Activated CD8-positive, alpha-beta T cell treated with anti-CD3 and anti-CD28 coated beads for 36 hours (primary cell): ENCODE measurements at regions of chr9 and their contacts with region 1.

Region 1: DNA sequence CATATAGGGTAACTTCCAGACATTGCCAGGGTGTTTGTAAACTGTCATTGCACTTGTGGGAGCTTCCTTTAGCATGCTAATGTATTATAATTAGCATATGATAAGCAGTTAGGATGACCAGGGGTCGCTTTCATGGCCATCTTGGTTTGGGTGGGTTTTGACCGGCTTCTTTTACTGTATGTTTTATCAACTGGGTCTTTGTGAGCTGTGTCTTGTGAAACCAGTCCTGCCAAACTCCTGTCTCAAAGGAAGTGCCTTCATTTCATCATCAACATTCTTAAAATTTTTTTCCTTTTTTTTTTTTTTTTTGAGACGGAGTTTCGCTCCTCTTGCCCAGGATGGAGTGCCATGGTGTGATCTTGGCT is 11.9 kb upstream of the MELK start:
- DNase-seq: no peak
- ATAC-seq: no peak
- H3K4me3 Mint-ChIP-seq: no peak overlapping the region
- H3K27ac Mint-ChIP-seq: no peak overlapping the region
- H3K4me1 Mint-ChIP-seq: no peaks in the 10 kb centered on the region
- H3K27me3 Mint-ChIP-seq: no peaks in the 10 kb centered on the region
- CTCF ChIP-seq: no peak

Region 2: DNA sequence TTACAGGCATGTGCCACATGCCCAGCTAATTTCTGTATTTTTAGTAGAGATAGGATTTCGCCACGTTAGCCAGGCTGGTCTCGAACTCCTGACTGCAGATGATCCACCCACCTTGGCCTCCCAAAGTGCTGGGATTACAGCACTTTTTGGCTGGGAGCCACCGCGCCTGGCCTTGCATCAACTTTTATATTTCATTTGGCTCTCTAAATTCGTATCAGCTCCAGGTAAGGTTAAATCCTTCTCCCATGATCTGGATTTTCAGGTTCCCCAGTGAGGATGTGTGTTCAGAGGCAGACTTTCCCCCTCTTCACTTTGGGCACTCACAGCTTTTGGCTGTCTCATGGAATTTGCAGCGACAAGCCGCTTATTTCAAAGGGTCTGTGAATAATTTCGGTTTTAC is 143.9 kb before region 1 on chr9:
- CTCF ChIA-PET with region 1: interaction called, 14 read pairs
- POLR2A ChIA-PET with region 1: no interaction called
- intact Hi-C with region 1: no loop called
- DNase-seq: no peak
- ATAC-seq: no peak
- H3K4me3 Mint-ChIP-seq: no peak overlapping the region
- H3K27ac Mint-ChIP-seq: no peak overlapping the region
- H3K4me1 Mint-ChIP-seq: peaks cover 8% of the 10 kb centered on the region
- H3K27me3 Mint-ChIP-seq: no peaks in the 10 kb centered on the region
- CTCF ChIP-seq: no peak

Region 3: GRCh38 chr9:36441966-36442365 is 118.9 kb before region 1 on chr9:
- CTCF ChIA-PET with region 1: interaction called, 10 read pairs
- POLR2A ChIA-PET with region 1: no interaction called
- intact Hi-C with region 1: no loop called
- DNase-seq: no peak
- ATAC-seq: no peak
- H3K4me3 Mint-ChIP-seq: no peak overlapping the region
- H3K27ac Mint-ChIP-seq: no peak overlapping the region
- H3K4me1 Mint-ChIP-seq: peaks cover 55% of the 10 kb centered on the region
- H3K27me3 Mint-ChIP-seq: no peaks in the 10 kb centered on the region
- CTCF ChIP-seq: no peak

Region 4: GRCh38 chr9:36450110-36450732 is 110.6 kb before region 1 on chr9:
- CTCF ChIA-PET with region 1: interaction called, 47 read pairs
- POLR2A ChIA-PET with region 1: no interaction called
- intact Hi-C with region 1: loop called (anchors 5 kb)
- DNase-seq: peak; percentile 21
- ATAC-seq: no peak
- H3K4me3 Mint-ChIP-seq: no peak overlapping the region
- H3K27ac Mint-ChIP-seq: no peak overlapping the region
- H3K4me1 Mint-ChIP-seq: peaks cover 15% of the 10 kb centered on the region
- H3K27me3 Mint-ChIP-seq: no peaks in the 10 kb centered on the region
- CTCF ChIP-seq: peak; percentile 80

Region 5: GRCh38 chr9:36470643-36471290 is 90.1 kb before region 1 on chr9:
- CTCF ChIA-PET with region 1: interaction called, 13 read pairs
- POLR2A ChIA-PET with region 1: no interaction called
- intact Hi-C with region 1: no loop called
- DNase-seq: peak; percentile 84
- ATAC-seq: peak; percentile 99
- H3K4me3 Mint-ChIP-seq: peak overlapping the region; percentile 71
- H3K27ac Mint-ChIP-seq: peak overlapping the region; percentile 91
- H3K4me1 Mint-ChIP-seq: peaks cover 39% of the 10 kb centered on the region
- H3K27me3 Mint-ChIP-seq: no peaks in the 10 kb centered on the region
- CTCF ChIP-seq: no peak

Region 6: DNA sequence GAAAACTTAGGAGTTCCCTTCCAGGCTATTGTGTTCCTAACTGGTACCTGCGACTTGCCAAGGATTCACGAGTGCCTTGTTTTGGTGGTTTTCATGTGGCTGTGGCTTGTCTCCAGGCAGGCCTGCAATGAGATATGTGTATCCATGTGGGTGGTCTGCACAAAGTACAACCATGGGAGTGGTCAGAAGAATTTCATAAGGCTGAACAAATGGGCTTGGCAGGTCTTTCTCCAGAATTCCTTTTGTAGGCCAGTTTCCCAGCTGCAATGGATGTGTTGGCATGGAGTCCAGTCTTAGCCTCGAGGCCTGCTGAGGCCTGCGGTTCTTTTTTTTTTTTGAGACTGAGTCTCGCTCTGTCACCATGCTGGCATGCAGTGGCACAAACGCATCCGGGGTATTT is 16.9 kb before region 1 on chr9:
- CTCF ChIA-PET with region 1: interaction called, 18 read pairs
- POLR2A ChIA-PET with region 1: no interaction called
- intact Hi-C with region 1: no loop called
- DNase-seq: no peak
- ATAC-seq: no peak
- H3K4me3 Mint-ChIP-seq: no peak overlapping the region
- H3K27ac Mint-ChIP-seq: no peak overlapping the region
- H3K4me1 Mint-ChIP-seq: no peaks in the 10 kb centered on the region
- H3K27me3 Mint-ChIP-seq: no peaks in the 10 kb centered on the region
- CTCF ChIP-seq: no peak

Region 7: GRCh38 chr9:36572515-36573418 is 11.9 kb after region 1 on chr9 and contains the start of gene MELK:
- CTCF ChIA-PET with region 1: interaction called, 13 read pairs
- POLR2A ChIA-PET with region 1: no interaction called
- intact Hi-C with region 1: no loop called
- DNase-seq: peak; percentile 90
- ATAC-seq: peak; percentile 84
- H3K4me3 Mint-ChIP-seq: peak within 1 kb of the TSS; percentile 98
- H3K27ac Mint-ChIP-seq: peak within 1 kb of the TSS; percentile 83
- H3K4me1 Mint-ChIP-seq: peaks cover 31% of the 10 kb centered on the region
- H3K27me3 Mint-ChIP-seq: no peaks in the 10 kb centered on the region
- CTCF ChIP-seq: no peak
- total RNA-seq, gene MELK: 44.3 to 49.5 TPM

Region 8: GRCh38 chr9:36632892-36633291 is 72.1 kb after region 1 on chr9:
- CTCF ChIA-PET with region 1: no interaction called
- POLR2A ChIA-PET with region 1: no interaction called
- intact Hi-C with region 1: no loop called
- DNase-seq: no peak
- ATAC-seq: no peak
- H3K4me3 Mint-ChIP-seq: no peak overlapping the region
- H3K27ac Mint-ChIP-seq: no peak overlapping the region
- H3K4me1 Mint-ChIP-seq: no peaks in the 10 kb centered on the region
- H3K27me3 Mint-ChIP-seq: no peaks in the 10 kb centered on the region
- CTCF ChIP-seq: peak; percentile 62